ENCODE measurements at regions of chr11 and their contacts with region 1.

Region 1: DNA sequence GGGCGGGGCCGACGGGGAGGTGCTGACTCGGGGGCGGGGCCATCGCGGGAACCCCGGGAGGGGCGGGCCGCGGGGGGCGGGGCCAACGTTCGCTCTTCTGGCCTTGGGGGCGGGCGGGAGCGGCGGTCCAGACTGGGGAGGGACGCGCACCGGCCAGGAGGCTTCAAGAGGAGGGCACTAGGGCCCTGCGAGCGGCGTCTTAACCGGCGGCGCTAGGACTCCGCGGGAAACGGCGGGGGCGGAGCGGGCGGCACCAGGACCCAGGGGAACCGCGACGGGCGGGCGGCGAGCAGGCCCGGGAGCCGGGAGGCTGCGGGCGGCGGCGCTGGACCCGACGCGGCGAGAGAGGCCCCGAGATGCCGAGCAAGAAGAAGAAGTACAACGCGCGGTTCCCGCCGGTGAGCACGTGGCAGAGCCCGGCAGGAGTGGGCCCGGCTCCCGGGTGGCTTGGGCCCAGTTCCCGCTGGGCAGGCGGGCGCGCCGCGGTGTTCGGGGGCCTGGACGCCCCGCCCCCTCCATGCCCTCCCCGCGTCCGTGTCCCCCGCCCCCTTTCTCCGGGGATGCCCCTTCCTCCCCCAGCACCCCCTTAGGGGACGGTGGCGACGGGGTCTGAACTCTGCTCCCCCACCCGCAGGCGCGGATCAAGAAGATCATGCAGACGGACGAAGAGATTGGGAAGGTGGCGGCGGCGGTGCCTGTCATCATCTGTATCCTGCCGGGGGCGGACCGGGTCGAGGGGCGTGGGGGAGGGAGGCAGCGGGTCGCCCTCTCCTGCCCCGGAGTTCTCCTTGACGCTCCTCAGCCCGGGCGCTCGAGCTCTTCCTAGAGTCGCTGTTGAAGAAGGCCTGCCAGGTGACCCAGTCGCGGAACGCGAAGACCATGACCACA is at the start of gene DRAP1:
- DNase-seq: peak; percentile 97
- H3K4me3 Mint-ChIP-seq: peak within 1 kb of the TSS; percentile 94
- H3K27ac Mint-ChIP-seq: peak within 1 kb of the TSS; percentile 84
- H3K4me1 Mint-ChIP-seq: peaks cover 17% of the 10 kb centered on the region
- H3K27me3 Mint-ChIP-seq: no peaks in the 10 kb centered on the region
- total RNA-seq, gene DRAP1: 119 and 129 TPM in 2 replicates

Region 2: DNA sequence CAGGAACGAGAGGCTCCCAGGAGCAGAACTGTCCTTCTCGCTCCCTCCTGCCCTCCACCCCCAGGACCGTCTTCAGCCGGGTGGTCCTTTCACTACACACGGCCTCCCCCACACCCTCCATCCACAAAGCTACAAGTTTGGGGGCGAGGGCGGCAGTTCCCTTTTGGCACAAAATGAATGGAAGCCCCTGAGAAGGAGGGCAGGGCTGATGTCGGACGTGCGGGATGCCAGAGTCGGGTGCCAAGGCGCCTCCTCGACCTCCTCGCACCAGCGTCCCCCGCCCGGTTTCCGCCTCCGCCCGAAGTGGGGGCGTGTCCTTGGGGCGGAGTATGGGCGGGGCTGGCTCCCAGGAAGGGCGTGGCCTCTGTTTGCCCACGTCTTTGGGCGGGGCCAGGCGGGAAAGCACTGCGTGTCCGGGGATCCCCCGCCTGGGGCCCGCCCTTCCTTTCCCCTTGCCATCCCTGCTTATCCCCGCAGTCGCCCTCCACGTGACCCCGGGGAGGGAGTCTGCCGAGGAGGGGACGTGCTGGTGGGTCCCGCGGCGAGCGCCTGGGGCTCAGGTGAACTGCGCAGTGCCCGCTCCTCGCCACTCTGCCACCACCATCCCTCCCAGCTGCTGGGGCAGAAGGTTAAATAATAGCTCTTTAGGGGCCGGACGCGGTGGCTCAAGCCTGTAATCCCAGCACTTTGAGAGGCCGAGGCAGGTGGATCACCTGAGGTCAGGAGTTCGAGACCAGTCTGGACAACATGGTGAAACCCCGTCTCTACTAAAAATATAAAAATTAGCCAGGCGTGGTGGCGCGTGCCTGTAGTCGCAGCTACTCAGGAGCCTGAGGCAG is 45.9 kb before region 1 on chr11:
- intact Hi-C with region 1: loop called (anchors 1 kb)
- DNase-seq: peak; percentile 97
- H3K4me3 Mint-ChIP-seq: peak overlapping the region; percentile 90
- H3K27ac Mint-ChIP-seq: peak overlapping the region; percentile 72
- H3K4me1 Mint-ChIP-seq: peaks cover 16% of the 10 kb centered on the region
- H3K27me3 Mint-ChIP-seq: peaks cover 1% of the 10 kb centered on the region

Region 3: DNA sequence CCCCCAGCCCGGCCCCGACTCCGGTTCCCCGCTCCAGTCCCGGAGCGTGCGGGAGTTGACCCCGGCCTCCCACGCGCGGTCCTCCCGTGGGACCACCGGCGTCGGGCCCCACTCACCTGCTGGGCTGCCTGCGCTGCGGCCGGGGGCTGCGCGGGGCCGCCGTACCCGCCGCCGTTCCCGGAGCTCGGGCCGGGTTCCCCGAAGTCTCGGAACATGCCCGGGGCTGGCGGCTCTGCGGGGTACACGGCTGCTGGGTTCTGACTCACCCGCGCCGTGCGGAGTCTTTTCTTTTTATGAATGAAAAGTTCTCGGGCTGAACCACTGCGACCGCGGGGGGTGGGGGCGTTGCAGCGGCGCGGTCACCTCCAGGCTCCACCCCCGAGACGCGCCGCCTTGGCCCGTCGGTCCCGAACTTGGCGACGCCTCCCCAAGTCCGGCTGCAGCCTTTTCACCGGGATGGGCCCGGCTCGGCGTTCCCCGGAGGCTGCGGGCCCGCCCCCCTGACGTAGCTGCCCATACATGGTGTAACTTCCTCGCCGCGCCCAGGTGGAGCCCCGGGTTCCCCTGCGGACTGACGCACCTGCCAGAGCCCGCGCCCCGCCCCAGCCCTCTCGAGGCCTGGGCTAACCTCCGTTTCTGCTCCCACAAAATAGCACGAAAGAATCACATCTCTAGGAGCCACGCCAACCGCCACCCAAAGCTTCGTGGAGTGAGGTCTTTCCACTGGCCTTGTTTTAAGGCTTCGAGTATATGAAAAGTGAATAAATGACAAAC is 19.1 kb before region 1 on chr11 and contains the start of gene FOSL1:
- intact Hi-C with region 1: loop called (anchors 1 kb)
- DNase-seq: peak; percentile 89
- H3K4me3 Mint-ChIP-seq: peak within 1 kb of the TSS; percentile 82
- H3K27ac Mint-ChIP-seq: peak within 1 kb of the TSS; percentile 67
- H3K4me1 Mint-ChIP-seq: peaks cover 23% of the 10 kb centered on the region
- H3K27me3 Mint-ChIP-seq: peaks cover 9% of the 10 kb centered on the region
- total RNA-seq, gene FOSL1: 31.7 and 33.5 TPM in 2 replicates

Region 4: DNA sequence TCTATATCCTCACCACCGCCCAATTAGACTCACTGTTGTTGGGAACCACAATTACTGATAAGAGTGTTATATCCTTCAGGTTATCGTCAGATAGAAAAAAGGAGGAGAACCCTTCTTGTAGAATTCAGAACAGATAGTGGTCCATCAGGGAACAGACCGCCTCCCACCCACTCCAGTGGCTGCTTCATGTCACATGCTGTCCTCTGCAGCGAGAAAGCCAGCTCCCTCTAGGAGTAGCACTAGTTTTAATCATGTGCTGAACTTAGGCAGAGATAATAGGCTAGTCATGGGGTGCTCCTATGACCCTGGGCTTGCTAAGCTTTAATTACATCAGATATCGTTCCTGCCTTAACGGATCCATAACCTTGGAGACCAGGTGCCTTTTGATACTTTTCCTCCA is 297.5 kb after region 1 on chr11:
- intact Hi-C with region 1: no loop called
- DNase-seq: no peak
- H3K4me3 Mint-ChIP-seq: no peak overlapping the region
- H3K27ac Mint-ChIP-seq: no peak overlapping the region
- H3K4me1 Mint-ChIP-seq: peaks cover 4% of the 10 kb centered on the region
- H3K27me3 Mint-ChIP-seq: no peaks in the 10 kb centered on the region

Measured in activated T-helper 1 cell treated with anti-CD3 and anti-CD28 coated beads, Interleukin-12 subunit alpha, Interleukin-12 subunit beta, Interleukin-2, Interleukin-4 antibody, amounts not matched to agents 30 ng/mL and 10 ng/mL and 1 ng/mL, durations not matched to agents 14 hours and 24 hours and 36 hours (primary cell).